ENCODE measurements at regions of chr17 and their contacts with region 1.

Region 1: GRCh38 chr17:7856883-7857723 is at the start of gene NAA38:
- DNase-seq: peak; percentile 98
- ATAC-seq: peak; percentile 89
- H3K4me3 Mint-ChIP-seq: no peak within 1 kb of the TSS
- H3K27ac Mint-ChIP-seq: no peak within 1 kb of the TSS
- H3K4me1 Mint-ChIP-seq: peaks cover 3% of the 10 kb centered on the region
- H3K27me3 Mint-ChIP-seq: no peaks in the 10 kb centered on the region
- total RNA-seq, gene NAA38: 92.7 to 93.1 TPM

Region 2: DNA sequence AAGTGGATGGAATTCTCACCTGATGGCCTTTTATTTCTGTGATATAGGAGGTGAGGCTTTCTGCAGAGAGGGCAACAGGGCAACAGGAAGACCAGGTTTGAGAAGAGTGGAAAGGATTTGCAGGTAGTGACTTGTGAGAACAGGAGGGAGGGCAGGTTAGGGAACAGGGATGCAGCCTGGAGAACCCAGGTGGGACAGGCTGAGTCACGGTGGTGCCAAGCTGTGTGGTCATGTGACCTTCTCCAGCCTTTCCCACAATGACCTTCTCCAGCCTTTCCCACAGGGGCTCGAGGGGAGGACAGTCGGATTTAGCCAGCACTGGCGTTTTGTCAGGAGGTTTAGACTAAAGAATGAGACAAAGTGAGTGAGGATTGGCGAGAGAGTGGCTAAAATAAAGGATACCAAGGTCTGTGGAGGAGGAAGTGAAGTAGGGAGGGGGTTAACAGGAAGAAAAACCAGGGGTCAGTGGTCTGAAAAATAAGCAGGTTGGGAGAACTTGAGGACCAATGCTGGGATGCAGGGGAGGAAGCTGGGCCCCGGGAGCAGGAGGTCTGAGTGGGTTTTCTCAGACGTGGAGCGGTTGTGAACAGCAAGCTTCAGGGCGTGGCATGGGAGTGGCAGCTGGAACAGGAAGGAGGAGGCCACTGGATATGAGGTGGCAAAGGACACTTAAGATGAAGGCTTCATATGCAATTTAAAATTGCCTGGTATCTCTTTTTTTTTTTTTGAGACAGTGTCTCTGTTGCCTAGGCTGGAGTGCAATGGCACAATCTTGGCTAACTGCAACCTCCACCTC is 101.8 kb before region 1 on chr17:
- CTCF ChIA-PET with region 1: no interaction called
- POLR2A ChIA-PET with region 1: no interaction called
- DNase-seq: no peak
- ATAC-seq: no peak
- H3K4me3 Mint-ChIP-seq: no peak overlapping the region
- H3K27ac Mint-ChIP-seq: no peak overlapping the region
- H3K4me1 Mint-ChIP-seq: peaks cover 12% of the 10 kb centered on the region
- H3K27me3 Mint-ChIP-seq: peaks cover 4% of the 10 kb centered on the region

Region 3: GRCh38 chr17:7834962-7835813 is 21.9 kb before region 1 on chr17:
- CTCF ChIA-PET with region 1: interaction called, 21 read pairs
- POLR2A ChIA-PET with region 1: interaction called, 20 read pairs
- DNase-seq: peak; percentile 91
- ATAC-seq: peak; percentile 56
- H3K4me3 Mint-ChIP-seq: peak overlapping the region; percentile 90
- H3K27ac Mint-ChIP-seq: peak overlapping the region; percentile 94
- H3K4me1 Mint-ChIP-seq: peaks cover 55% of the 10 kb centered on the region
- H3K27me3 Mint-ChIP-seq: peaks cover 8% of the 10 kb centered on the region

Region 4: DNA sequence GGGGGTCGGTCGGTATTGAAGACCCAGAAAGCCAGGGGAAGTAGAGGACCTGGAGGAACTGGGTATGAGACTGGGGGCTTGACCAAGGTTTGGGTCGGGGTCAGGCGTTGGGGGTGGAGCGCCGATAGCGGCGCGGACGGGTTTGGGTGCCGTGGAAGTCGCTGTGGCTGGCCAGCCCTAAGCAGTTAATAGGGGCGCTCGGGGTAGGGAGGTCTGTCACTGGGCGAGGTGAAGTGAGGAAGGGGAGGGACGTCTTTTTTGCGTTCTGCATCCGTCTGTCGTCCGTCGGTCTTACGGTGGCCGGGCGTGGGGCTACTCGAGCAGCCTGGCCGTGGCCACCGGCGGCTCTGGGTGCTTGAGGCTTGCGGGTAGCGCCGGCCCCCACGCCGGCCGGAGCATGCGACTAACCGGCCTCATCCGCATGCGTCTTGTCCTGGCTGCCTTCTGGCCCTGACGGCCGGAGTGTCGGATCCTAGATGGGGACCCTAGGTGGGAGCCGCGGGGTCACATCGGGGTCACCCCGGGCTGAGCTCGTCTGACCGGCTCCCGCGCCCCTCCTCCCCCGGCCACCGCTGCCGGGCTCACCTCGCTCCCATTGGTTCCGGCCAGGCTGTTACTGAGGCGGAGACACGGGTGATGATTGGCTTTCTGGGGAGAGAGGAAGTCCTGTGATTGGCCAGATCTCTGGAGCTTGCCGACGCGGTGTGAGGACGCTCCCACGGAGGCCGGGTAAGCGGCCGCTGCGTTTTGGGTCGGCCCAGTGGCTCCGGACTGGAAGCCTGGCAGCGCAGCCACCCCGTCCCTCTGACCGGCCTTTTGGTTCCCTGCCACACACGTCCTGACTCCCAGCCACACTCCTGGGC is 12.6 kb before region 1 on chr17:
- CTCF ChIA-PET with region 1: interaction called, 17 read pairs
- POLR2A ChIA-PET with region 1: interaction called, 11 read pairs
- DNase-seq: peak; percentile 91
- ATAC-seq: peak; percentile 64
- H3K4me3 Mint-ChIP-seq: peak overlapping the region; percentile 97
- H3K27ac Mint-ChIP-seq: peak overlapping the region; percentile 99
- H3K4me1 Mint-ChIP-seq: peaks cover 38% of the 10 kb centered on the region
- H3K27me3 Mint-ChIP-seq: no peaks in the 10 kb centered on the region

Region 5: DNA sequence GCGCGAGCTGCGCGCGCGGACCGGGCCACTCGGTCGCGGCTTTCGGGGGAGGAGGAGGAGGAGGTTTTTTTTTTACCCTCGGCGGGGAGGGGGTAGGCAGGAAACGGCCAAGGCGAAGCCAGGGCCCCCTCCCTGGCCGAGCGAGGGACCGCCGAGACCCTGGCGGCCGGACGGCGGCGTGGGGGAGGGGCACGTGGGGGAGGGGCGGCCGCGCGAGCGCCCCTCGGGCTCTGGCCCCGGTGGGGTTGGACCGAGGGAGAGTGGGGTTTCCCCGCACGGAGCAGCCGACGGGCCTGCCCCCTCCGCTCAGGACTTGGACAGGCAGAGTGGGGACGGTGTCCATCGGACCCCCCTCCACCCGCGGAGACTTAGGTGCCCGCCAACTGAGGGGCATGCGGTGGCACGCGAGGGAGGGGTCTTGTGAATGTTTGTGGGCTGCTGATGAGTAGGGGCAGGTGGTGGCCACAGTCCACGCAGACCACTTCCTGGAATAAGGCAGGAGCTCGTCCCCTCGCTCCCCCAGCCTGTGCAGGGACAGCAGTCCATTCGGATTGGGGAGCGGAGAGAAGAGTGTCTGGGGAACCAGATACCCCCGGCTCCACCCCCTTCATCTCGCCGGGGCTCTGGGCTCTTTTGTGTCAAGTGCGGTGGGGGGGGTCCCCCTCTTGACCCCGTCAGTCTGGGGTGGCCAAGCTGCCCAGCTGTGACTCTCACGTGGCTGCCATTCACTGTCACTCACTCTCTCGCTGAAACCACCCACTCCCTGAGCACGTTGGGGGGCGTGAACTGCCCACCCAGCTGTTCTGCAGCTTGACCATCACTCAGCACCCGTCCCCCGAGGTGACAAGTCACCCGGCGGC is 28.5 kb after region 1 on chr17:
- CTCF ChIA-PET with region 1: interaction called, 8 read pairs
- POLR2A ChIA-PET with region 1: interaction called, 12 read pairs
- DNase-seq: peak; percentile 60
- ATAC-seq: peak; percentile 8
- H3K4me3 Mint-ChIP-seq: peak overlapping the region; percentile 61
- H3K27ac Mint-ChIP-seq: peak overlapping the region; percentile 61
- H3K4me1 Mint-ChIP-seq: peaks cover 3% of the 10 kb centered on the region
- H3K27me3 Mint-ChIP-seq: no peaks in the 10 kb centered on the region

Region 6: DNA sequence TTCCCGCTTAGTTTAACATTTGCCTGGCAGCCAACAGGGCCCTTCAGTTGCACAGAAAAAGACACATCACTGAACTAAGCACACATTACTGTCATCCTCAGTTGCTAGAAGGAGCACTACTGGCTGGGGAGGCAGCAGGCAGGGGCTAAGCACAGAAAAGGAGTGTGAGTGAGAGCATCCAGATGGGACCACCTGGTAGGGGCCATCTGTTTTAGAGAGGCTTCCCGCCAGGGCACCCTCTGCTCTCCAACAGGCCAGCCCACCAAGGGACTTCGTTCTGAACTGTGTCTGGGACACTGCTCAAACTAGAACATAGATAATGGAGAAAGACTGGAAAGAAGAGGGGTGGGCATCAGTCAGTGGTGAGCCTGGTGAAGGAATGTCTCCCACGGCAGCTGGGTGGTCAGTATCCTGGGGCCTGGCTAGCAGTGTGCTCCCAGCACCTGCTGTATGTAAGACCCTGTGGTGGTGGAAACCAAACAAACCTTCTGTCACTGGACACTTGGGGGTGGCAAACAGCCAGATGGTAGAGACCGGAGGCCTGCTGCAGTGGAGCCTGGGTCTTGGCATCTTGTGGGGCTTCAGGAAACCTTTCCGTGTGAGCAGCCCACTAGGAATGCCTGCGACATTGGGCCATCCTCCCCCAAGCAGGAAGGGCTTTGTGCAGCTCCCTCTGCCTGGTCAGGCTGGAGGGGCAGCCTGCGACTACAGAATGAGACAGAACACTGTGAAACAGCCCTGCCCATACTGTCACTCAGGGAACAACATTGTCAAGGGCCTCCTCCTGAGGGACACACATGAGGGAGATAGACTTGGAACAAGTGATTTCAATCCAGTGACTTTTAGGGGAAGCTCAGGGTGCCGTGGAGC is 418.6 kb after region 1 on chr17:
- CTCF ChIA-PET with region 1: no interaction called
- POLR2A ChIA-PET with region 1: no interaction called
- DNase-seq: no peak
- ATAC-seq: no peak
- H3K4me3 Mint-ChIP-seq: no peak overlapping the region
- H3K27ac Mint-ChIP-seq: no peak overlapping the region
- H3K4me1 Mint-ChIP-seq: no peaks in the 10 kb centered on the region
- H3K27me3 Mint-ChIP-seq: no peaks in the 10 kb centered on the region

Measured in activated CD8-positive, alpha-beta T cell treated with anti-CD3 and anti-CD28 coated beads, Interleukin-2, amount 10 ng/mL, durations not matched to agents 7 days and 5 days (primary cell).